ENCODE measurements at regions of chr17 and their contacts with region 1.

Region 1: DNA sequence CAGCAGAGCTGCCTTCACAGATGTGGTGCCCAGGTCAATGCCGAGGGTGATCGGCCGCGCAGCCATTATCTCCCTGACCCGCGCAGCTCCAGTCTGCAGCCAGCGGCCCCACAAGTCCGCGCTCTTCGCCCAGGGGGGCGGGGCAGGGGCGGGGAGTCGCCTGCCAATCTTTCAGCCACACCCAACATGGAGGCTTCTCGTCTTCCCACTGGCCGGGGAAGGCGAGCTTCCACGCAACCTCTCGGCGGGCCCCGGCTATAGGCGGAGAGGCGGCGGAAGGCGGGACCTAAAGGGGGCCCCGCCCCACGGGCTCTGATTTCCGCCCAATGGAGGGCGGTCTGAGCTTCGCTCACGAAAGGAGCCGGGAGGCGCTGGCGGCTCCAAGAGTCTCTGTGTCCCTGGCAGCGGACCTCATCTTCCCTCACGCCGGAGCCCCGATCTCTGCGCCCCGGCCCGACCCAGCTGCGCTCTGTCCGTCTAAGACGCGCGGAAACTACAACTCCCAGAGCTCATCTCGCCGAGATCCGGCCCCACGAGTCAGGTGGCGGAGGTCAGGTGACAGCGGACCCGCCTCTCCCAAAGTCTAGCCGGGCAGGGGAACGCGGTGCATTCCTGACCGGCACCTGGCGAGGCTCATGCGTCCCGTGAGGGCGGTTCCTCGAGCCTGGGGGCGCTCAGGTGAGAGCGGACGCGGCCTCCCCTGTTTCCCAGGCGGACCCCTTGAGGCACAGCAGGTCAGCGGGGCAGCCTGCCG is at the starts of genes CTNS and SHPK:
- DNase-seq: peak; percentile 86 to 96 (median 94)
- ATAC-seq: peak; percentile 98
- H3K4me3 ChIP-seq: peak within 1 kb of the TSS; percentile 93 to 94
- H3K4me3 Mint-ChIP-seq: peak within 1 kb of the TSS; percentile 97
- H3K27ac ChIP-seq: peak within 1 kb of the TSS; percentile 90 to 99
- H3K27ac Mint-ChIP-seq: peak within 1 kb of the TSS; percentile 99
- H3K4me1 ChIP-seq: peaks cover 8% of the 10 kb centered on the region
- H3K4me1 Mint-ChIP-seq: peaks cover 26% of the 10 kb centered on the region
- H3K27me3 ChIP-seq: no peaks in the 10 kb centered on the region
- H3K27me3 Mint-ChIP-seq: no peaks in the 10 kb centered on the region
- CTCF ChIP-seq: no peak
- total RNA-seq, gene CTNS: 3.1 to 4.2 TPM
- total RNA-seq, gene SHPK: 2.4 to 3.0 TPM

Region 2: DNA sequence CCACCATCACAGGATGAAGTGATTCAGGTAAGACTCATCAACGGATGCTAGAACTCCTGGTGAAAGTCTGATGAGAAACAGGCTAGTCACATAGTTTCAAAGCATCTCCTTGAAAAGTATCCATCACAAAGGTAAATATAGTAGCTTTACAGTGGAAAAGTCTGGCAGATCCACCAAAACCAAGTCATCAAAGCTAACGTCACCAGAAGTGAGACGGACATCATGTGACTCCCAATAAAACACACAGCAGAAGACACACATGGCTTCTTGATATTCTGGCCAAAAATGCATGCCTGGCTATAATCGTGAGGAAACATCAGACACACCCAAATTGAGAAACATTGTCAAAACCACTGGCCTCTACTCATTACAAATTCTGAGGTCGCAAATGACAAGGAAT is 60.8 kb before region 1 on chr17:
- CTCF ChIA-PET with region 1: no interaction called
- POLR2A ChIA-PET with region 1: no interaction called
- intact Hi-C with region 1: no loop called
- DNase-seq: no peak
- ATAC-seq: no peak
- H3K4me3 ChIP-seq: no peak overlapping the region
- H3K4me3 Mint-ChIP-seq: no peak overlapping the region
- H3K27ac ChIP-seq: no peak overlapping the region
- H3K27ac Mint-ChIP-seq: no peak overlapping the region
- H3K4me1 ChIP-seq: no peaks in the 10 kb centered on the region
- H3K4me1 Mint-ChIP-seq: no peaks in the 10 kb centered on the region
- H3K27me3 ChIP-seq: no peaks in the 10 kb centered on the region
- H3K27me3 Mint-ChIP-seq: no peaks in the 10 kb centered on the region
- CTCF ChIP-seq: no peak

Region 3: GRCh38 chr17:3610523-3610922 is 25.8 kb before region 1 on chr17:
- CTCF ChIA-PET with region 1: no interaction called
- POLR2A ChIA-PET with region 1: no interaction called
- intact Hi-C with region 1: no loop called
- DNase-seq: no peak
- ATAC-seq: no peak
- H3K4me3 ChIP-seq: no peak overlapping the region
- H3K4me3 Mint-ChIP-seq: no peak overlapping the region
- H3K27ac ChIP-seq: no peak overlapping the region
- H3K27ac Mint-ChIP-seq: no peak overlapping the region
- H3K4me1 ChIP-seq: no peaks in the 10 kb centered on the region
- H3K4me1 Mint-ChIP-seq: no peaks in the 10 kb centered on the region
- H3K27me3 ChIP-seq: no peaks in the 10 kb centered on the region
- H3K27me3 Mint-ChIP-seq: no peaks in the 10 kb centered on the region
- CTCF ChIP-seq: no peak

Region 4: GRCh38 chr17:3668279-3669085 is 32.2 kb after region 1 on chr17 and contains the starts of genes EMC6 and TAX1BP3:
- CTCF ChIA-PET with region 1: no interaction called
- POLR2A ChIA-PET with region 1: interaction called, 5 read pairs
- intact Hi-C with region 1: loop called in 1 of 2 experiments (anchors 1 kb)
- DNase-seq: peak; percentile 97 to 100 (median 98)
- ATAC-seq: peak; percentile 92
- H3K4me3 ChIP-seq: peak within 1 kb of the TSS; percentile 73 to 100
- H3K4me3 Mint-ChIP-seq: peak within 1 kb of the TSS; percentile 90
- H3K27ac ChIP-seq: peak within 1 kb of the TSS; percentile 58 to 86
- H3K27ac Mint-ChIP-seq: peak within 1 kb of the TSS; percentile 81
- H3K4me1 ChIP-seq: peaks cover 21% of the 10 kb centered on the region
- H3K4me1 Mint-ChIP-seq: peaks cover 22% of the 10 kb centered on the region
- H3K27me3 ChIP-seq: no peaks in the 10 kb centered on the region
- H3K27me3 Mint-ChIP-seq: no peaks in the 10 kb centered on the region
- CTCF ChIP-seq: no peak
- total RNA-seq, gene EMC6: 39.4 to 41.6 TPM
- total RNA-seq, gene TAX1BP3: 5.5 to 5.8 TPM

Region 5: DNA sequence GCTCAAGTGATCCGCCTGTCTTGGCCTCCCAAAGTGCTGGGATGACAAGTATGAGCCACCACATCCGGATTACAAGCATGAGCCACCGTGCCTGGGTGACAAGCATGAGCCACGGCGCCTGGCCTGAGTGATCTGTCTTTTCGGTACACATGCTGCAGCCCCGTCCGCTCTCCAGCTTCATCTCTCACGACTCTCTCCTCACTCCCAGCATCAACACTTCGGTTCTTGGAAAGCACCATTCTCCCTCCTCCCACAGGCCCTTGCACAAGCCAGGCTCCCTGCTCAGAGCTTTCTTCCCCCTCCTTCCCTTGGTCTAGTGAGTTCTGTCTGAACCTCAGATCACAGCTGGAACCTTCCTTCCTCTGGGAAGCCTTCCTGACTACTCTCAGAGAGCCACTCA is 216.2 kb after region 1 on chr17:
- CTCF ChIA-PET with region 1: no interaction called
- POLR2A ChIA-PET with region 1: no interaction called
- intact Hi-C with region 1: no loop called
- DNase-seq: no peak
- ATAC-seq: no peak
- H3K4me3 ChIP-seq: no peak overlapping the region
- H3K4me3 Mint-ChIP-seq: no peak overlapping the region
- H3K27ac ChIP-seq: no peak overlapping the region
- H3K27ac Mint-ChIP-seq: no peak overlapping the region
- H3K4me1 ChIP-seq: no peaks in the 10 kb centered on the region
- H3K4me1 Mint-ChIP-seq: no peaks in the 10 kb centered on the region
- H3K27me3 ChIP-seq: no peaks in the 10 kb centered on the region
- H3K27me3 Mint-ChIP-seq: peaks cover 7% of the 10 kb centered on the region
- CTCF ChIP-seq: no peak

Region 6: DNA sequence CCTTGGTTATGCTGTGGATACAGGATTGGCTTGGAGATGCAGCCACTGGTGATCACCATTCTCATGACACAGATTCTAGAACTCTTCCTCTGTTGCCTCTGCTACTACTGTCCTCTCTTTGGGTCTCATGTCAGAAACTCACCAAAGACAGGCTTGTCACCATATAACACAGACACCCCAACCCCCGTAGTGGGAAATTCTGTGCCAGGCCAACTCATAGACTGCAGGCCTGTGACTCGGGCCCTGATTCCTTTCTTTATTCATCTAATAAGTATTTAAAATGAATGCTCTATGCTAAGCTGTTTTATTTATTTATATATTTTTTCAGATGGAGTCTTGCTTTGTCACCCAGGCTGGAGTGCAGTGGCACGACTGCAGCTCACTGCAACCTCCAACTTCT is 516.1 kb after region 1 on chr17:
- CTCF ChIA-PET with region 1: no interaction called
- POLR2A ChIA-PET with region 1: no interaction called
- intact Hi-C with region 1: no loop called
- DNase-seq: no peak
- ATAC-seq: no peak
- H3K4me3 ChIP-seq: no peak overlapping the region
- H3K4me3 Mint-ChIP-seq: no peak overlapping the region
- H3K27ac ChIP-seq: no peak overlapping the region
- H3K27ac Mint-ChIP-seq: no peak overlapping the region
- H3K4me1 ChIP-seq: no peaks in the 10 kb centered on the region
- H3K4me1 Mint-ChIP-seq: peaks cover 3% of the 10 kb centered on the region
- H3K27me3 ChIP-seq: no peaks in the 10 kb centered on the region
- H3K27me3 Mint-ChIP-seq: no peaks in the 10 kb centered on the region
- CTCF ChIP-seq: no peak